ENCODE measurements at regions of chr1 and their contacts with region 1.

Region 1: DNA sequence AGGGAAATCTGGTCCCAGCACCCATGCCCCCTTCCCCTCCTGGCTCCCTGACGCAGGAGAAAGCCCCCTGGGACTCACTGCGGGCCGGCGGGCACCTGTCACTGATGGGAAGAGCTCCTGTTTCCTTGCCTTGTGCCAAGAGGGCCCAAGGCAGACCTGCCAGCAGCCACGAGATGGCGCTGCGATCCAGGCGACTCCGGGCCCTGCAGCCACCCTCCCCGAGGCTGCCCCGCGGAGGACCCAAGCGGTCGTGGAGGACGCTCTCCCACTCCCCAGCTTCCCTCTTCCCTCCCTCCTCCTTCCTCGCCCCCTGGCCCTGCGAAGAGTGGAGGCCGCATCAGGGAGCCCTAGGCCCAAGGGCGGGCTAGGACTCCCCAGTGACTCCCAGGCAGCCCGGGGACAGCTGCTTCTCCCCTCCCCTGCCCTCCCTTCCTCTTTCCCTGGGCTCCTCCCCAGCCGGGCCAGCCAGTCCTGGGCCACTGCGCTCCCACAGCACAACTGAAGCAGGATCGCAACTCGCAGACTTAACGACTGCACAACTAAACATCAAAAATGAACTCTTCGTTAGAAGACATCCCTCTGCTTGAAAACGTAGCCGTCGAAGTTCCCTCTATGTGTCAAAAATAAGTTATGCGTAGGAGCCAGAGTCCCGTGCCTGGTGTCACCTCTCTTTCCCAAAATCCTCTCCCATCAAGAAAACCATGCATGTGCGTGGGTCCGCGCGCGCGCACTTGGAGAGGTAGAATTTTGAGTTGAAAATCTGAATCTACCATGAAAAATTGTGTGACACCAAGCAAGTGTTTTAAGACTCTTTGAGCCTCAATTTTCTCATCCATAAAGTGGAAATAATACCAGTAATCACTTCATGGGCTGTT is 34.2 kb downstream of the BATF3 start:
- DNase-seq: peak; percentile 52
- ATAC-seq: peak; percentile 100
- H3K4me3 ChIP-seq: peak overlapping the region; percentile 51 to 74
- H3K27ac ChIP-seq: peak overlapping the region; percentile 18; the same call in 1 of the 2 replicates
- H3K4me1 ChIP-seq: no peaks in the 10 kb centered on the region
- H3K27me3 ChIP-seq: no peaks in the 10 kb centered on the region
- CTCF ChIP-seq: peak; percentile 96

Region 2: GRCh38 chr1:212477014-212477679 is 188.3 kb before region 1 on chr1:
- CTCF ChIA-PET with region 1: interaction called, 14 read pairs
- POLR2A ChIA-PET with region 1: no interaction called
- in situ Hi-C with region 1: no loop called
- intact Hi-C with region 1: loop called (anchors 10 kb)
- DNase-seq: peak; percentile 81
- ATAC-seq: peak; percentile 96
- H3K4me3 ChIP-seq: no peak overlapping the region
- H3K27ac ChIP-seq: no peak overlapping the region
- H3K4me1 ChIP-seq: 0 out of 2 replicates have a peak, but pooled peaks cover 2% of the 10 kb centered on the region
- H3K27me3 ChIP-seq: no peaks in the 10 kb centered on the region
- CTCF ChIP-seq: peak; percentile 95

Region 3: DNA sequence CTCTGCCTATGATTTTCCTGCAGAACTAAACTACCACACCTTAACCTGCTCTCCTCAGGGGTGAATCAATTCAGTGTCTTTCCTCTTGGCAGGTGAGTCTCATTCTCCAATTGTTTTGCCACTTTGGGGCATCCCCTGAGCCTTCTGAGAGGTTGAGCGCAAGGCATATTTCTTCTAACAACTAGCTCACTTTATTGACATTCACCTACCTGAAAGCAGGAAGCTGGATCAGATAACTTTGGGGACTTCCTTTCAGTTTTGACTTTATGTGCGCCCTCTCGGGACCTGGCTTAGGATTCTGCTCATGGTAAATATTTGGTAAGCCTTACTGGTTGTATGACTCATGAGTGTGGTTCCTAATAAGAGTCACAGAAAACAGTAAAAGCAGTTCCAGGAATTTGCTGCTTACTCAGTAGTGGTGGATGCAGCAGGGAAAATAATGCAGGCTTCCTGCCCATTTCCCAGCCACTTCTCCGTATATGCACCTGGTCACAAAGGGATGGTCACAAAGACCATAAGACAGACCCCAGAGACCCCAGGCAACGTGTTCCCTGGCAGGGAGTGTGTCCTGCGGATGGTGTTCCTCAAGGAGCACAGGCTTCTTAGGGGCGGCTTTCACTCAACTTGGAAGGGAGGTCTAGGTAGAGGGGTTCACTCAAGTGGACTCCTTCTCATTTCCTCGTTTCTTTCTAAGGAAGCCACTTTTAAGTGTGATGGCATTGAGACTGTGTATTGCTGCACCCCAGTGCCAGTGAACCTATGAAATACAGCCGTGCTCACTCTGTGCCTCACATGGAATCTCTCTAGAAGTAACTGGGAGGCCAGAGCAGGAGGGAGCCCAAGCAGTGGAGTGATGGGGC is 56.1 kb after region 1 on chr1:
- CTCF ChIA-PET with region 1: interaction called, 11 read pairs
- POLR2A ChIA-PET with region 1: no interaction called
- in situ Hi-C with region 1: no loop called
- intact Hi-C with region 1: loop called (anchors 10 kb)
- DNase-seq: peak; percentile 48
- ATAC-seq: peak; percentile 93
- H3K4me3 ChIP-seq: peak overlapping the region in 1 of 2 experiments; percentile 35; a peak in 2 of 4 replicates
- H3K27ac ChIP-seq: peak overlapping the region; percentile 44; the same call in 1 of the 2 replicates
- H3K4me1 ChIP-seq: peaks cover 14% of the 10 kb centered on the region
- H3K27me3 ChIP-seq: peaks cover 3% of the 10 kb centered on the region
- CTCF ChIP-seq: no peak

Region 4: GRCh38 chr1:212749821-212750535 is 84.5 kb after region 1 on chr1:
- CTCF ChIA-PET with region 1: interaction called, 13 read pairs
- POLR2A ChIA-PET with region 1: no interaction called
- in situ Hi-C with region 1: no loop called
- intact Hi-C with region 1: no loop called
- DNase-seq: peak; percentile 28
- ATAC-seq: peak; percentile 89
- H3K4me3 ChIP-seq: no peak overlapping the region
- H3K27ac ChIP-seq: no peak overlapping the region
- H3K4me1 ChIP-seq: no peaks in the 10 kb centered on the region
- H3K27me3 ChIP-seq: no peaks in the 10 kb centered on the region
- CTCF ChIP-seq: peak; percentile 87

Region 5: GRCh38 chr1:212782422-212783154 is 117.1 kb after region 1 on chr1:
- CTCF ChIA-PET with region 1: interaction called, 3 read pairs
- POLR2A ChIA-PET with region 1: no interaction called
- in situ Hi-C with region 1: no loop called
- intact Hi-C with region 1: loop called (anchors 1 kb)
- DNase-seq: no peak
- ATAC-seq: peak; percentile 68; the same call in 1 of the 2 replicates
- H3K4me3 ChIP-seq: no peak overlapping the region
- H3K27ac ChIP-seq: no peak overlapping the region
- H3K4me1 ChIP-seq: no peaks in the 10 kb centered on the region
- H3K27me3 ChIP-seq: no peaks in the 10 kb centered on the region
- CTCF ChIP-seq: peak; percentile 66

Measured in Panc1 (cell line).